ENCODE measurements at regions of chr10 and their contacts with region 1.

Region 1: GRCh38 chr10:32190890-32191491 is 134.8 kb upstream of the KIF5B start:
- DNase-seq: no peak
- H3K4me3 ChIP-seq: no peak overlapping the region
- H3K27ac ChIP-seq: no peak overlapping the region
- H3K4me1 ChIP-seq: no peaks in the 10 kb centered on the region
- H3K27me3 ChIP-seq: no peaks in the 10 kb centered on the region
- CTCF ChIP-seq: peak; percentile 76

Region 2: DNA sequence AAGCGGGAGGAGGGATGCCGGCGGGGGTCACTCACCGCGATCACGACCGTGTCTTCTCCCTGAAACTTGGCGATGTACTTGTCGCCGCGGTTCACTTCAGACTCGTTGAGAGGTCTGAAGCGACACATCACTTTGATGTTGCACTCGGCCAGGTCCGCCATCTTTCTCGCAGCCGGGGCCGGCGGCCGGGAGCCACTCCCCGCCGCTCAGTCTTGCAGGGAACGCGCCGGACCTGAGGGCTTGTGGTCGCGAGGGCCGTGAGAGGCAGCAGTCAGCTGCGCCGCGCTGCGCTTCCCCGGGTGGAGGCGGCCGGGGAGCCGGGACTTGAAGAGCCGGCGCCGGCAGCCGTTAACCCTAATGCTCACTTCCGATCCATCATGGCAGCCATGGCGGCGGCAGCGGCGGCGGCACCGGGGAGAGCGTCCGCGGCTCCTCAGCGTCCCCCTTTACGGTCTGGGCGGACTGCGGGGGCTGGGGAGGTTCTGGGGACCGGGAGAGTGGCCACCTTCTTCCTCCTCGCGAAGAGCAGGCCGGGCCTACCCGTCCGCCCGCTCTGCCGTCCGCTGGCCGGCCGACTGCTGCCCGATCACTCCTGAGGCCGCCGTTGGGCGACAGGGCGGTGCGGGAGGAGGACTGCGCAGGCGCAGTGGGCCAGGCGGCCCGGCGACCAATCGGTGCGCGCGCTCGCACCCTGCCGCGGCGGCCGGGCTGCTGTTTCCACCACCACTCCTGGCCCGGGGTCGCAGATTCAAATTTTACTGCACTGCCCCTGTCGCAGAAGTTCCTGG is 135.0 kb before region 1 on chr10 and contains the start of gene KIF5B:
- CTCF ChIA-PET with region 1: no interaction called
- POLR2A ChIA-PET with region 1: no interaction called
- intact Hi-C with region 1: loop called (anchors 10 kb)
- DNase-seq: peak; percentile 54 to 86
- H3K4me3 ChIP-seq: peak within 1 kb of the TSS; percentile 91
- H3K27ac ChIP-seq: peak within 1 kb of the TSS; percentile 66
- H3K4me1 ChIP-seq: peaks cover 25% of the 10 kb centered on the region
- H3K27me3 ChIP-seq: no peaks in the 10 kb centered on the region
- CTCF ChIP-seq: no peak
- total RNA-seq, gene KIF5B: 64.9 and 76.9 TPM in 2 replicates

Region 3: DNA sequence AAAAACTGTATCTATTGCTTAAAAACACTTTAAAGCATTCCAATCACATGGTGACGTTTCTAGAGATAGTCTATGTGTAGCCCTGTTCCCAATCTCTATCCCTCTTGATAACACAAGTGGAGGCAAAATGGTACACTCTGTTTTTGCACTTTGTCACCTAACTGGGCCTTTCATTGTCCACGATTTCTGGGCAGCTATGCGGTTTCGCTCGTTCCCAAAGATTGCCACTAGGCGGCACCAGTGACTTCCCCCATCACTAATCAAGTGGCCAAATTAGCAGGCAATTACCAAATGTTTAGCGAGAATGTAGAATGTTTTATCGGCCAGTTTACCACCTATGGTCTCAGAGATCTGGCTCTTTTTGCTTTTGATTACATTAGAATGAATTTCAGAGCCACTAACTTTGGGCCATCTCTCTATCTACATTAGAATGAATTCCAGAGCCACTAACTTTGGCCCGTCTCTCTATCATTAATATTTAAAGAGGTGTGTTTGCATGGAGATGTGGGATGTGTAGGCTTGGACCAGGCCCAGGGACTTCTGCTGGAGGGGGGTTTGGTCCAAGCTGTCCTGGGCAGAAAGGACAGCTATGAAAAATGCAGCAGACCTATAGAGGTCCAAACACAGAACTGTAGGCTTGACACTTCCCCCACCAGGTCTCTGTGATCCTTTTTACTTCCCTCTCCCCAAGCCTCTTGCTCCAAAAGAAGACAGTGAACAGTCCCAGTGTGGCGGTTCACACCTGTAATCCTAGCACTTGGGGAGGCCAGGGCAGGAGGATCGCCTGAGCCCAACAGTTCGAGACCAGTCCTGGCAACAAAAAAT is 65.8 kb after region 1 on chr10:
- CTCF ChIA-PET with region 1: interaction called, 3 read pairs
- POLR2A ChIA-PET with region 1: no interaction called
- intact Hi-C with region 1: loop called (anchors 10 kb)
- DNase-seq: peak in 1 of 2 experiments; percentile 47
- H3K4me3 ChIP-seq: no peak overlapping the region
- H3K27ac ChIP-seq: no peak overlapping the region
- H3K4me1 ChIP-seq: peaks cover 19% of the 10 kb centered on the region
- H3K27me3 ChIP-seq: no peaks in the 10 kb centered on the region
- CTCF ChIP-seq: peak; percentile 71

Region 4: DNA sequence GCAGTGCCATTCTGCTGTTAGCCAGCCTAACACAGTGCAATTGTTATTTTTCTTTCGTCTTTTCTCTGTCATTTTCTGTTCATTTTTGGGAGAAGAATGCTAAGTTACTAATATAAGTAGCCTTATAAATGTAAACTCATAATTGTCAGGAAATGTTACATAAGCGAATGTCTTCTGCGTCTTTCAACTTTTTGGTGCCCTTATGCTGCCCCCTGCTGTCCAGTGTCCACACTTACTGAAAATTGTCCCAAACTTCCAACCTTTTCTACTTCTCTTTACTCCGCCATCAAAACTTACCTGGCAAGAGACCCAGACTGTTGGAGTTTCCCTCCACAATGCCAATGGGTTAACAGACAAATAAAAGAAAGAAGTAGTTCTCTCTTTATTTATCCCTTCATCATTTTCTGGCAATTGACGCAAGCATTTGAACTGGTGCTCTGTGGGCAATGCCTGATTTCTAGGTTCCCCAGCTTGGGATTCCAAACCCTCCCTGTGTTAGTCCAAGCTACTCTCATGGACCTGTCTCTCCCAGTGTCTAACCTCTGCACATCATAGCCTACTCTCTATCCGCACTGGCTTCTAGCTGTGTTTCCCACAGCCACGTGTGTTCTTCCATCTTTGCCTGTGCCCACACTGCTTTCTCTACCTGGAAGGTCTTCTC is 176.9 kb after region 1 on chr10:
- CTCF ChIA-PET with region 1: no interaction called
- POLR2A ChIA-PET with region 1: no interaction called
- intact Hi-C with region 1: loop called (anchors 5 kb)
- DNase-seq: peak; percentile 56 to 59
- H3K4me3 ChIP-seq: no peak overlapping the region
- H3K27ac ChIP-seq: no peak overlapping the region
- H3K4me1 ChIP-seq: no peaks in the 10 kb centered on the region
- H3K27me3 ChIP-seq: no peaks in the 10 kb centered on the region
- CTCF ChIP-seq: peak; percentile 80

Measured in PC-9 (cell line).